IMR-90 (cell line): ENCODE measurements at regions of chr14 and their contacts with region 1.

Region 1: GRCh38 chr14:34582117-34582680 is 42.7 kb upstream of the EAPP start:
- DNase-seq: no peak
- ATAC-seq: no peak
- H3K4me3 ChIP-seq: no peak overlapping the region
- H3K27ac ChIP-seq: no peak overlapping the region
- H3K4me1 ChIP-seq: no peaks in the 10 kb centered on the region
- H3K27me3 ChIP-seq: no peaks in the 10 kb centered on the region
- CTCF ChIP-seq: no peak
- POLR2A ChIP-seq: no peak
- RAD21 ChIP-seq: no peak

Region 2: DNA sequence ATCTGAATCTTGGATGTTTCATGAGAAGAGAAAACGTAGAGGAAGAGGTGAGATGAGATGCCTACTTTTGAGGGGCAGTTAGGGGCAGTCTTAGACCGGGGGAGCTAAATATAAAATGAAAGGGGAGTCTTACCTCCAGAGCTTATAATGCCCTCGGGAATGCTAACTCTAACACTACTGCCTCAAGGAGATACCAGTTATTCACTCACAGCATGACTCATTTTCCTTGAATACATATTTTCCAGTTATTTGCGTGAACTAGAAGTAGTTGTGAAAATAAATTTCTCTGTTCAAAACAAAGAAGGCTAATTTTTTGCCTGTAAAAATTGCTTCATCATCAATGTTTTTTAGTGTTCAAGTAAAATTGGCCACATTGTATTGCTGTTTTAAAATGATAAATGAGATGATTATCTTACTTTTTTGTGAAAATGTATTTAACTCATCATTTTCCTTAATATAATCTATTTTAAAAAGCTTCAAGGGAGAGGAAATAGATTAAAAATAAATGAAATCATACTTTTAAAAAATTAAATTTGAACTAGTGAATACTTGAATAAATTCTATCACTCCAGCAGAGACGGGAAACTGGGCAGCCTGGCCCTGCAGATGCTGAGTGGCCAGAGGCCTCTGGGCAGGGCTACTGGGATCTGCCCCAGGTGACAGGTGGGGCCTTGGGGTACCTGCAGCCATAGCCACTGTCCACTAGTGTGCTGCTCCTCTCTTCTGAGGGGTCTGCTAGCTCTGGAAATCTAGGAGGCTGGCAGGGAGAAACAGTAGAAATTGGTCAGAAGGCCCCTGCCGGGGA is 970.6 kb before region 1 on chr14:
- CTCF ChIA-PET with region 1: no interaction called
- POLR2A ChIA-PET with region 1: no interaction called
- dilution Hi-C with region 1: no loop called
- in situ Hi-C with region 1: no loop called
- intact Hi-C with region 1: no loop called
- DNase-seq: no peak
- ATAC-seq: no peak
- H3K4me3 ChIP-seq: no peak overlapping the region
- H3K27ac ChIP-seq: no peak overlapping the region
- H3K4me1 ChIP-seq: no peaks in the 10 kb centered on the region
- H3K27me3 ChIP-seq: no peaks in the 10 kb centered on the region
- CTCF ChIP-seq: no peak
- POLR2A ChIP-seq: no peak
- RAD21 ChIP-seq: no peak

Region 3: DNA sequence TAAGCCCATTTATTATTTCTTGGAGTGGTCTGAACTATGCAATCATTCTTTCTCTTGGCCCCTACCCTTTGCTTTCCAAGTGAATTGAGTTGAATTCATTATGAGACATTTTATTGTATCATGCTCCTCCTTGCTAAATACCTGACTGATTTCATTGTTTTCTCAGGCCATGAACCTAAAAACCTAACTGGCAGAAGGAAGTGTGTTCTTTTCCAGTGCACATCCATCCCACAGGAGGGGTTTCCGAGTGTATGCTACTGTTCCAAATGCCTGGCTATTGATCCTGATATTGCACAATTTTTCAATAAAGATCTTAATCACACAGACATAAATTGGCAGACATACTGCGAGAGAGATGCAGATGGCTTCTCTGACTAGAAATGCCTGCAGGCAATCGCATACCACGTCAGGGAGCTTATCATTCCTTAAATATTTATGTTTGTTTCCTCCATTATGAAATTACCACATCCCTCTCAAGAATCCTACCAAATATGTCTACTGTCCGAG is 469.1 kb before region 1 on chr14:
- CTCF ChIA-PET with region 1: no interaction called
- POLR2A ChIA-PET with region 1: no interaction called
- dilution Hi-C with region 1: no loop called
- in situ Hi-C with region 1: no loop called
- intact Hi-C with region 1: no loop called
- DNase-seq: peak; percentile 31
- ATAC-seq: peak; percentile 62
- H3K4me3 ChIP-seq: no peak overlapping the region
- H3K27ac ChIP-seq: no peak overlapping the region
- H3K4me1 ChIP-seq: no peaks in the 10 kb centered on the region; the same call in 1 of the 2 replicates
- H3K27me3 ChIP-seq: no peaks in the 10 kb centered on the region; the same call in 1 of the 2 replicates
- CTCF ChIP-seq: no peak
- POLR2A ChIP-seq: no peak
- RAD21 ChIP-seq: no peak

Region 4: GRCh38 chr14:34593740-34594375 is 11.7 kb after region 1 on chr14:
- CTCF ChIA-PET with region 1: interaction called, 3 read pairs
- POLR2A ChIA-PET with region 1: interaction called, 10 read pairs
- dilution Hi-C with region 1: no loop called
- in situ Hi-C with region 1: no loop called
- intact Hi-C with region 1: no loop called
- DNase-seq: peak; percentile 83
- ATAC-seq: peak; percentile 82
- H3K4me3 ChIP-seq: no peak overlapping the region
- H3K27ac ChIP-seq: peak overlapping the region; percentile 87; the same call in 1 of the 2 replicates
- H3K4me1 ChIP-seq: no peaks in the 10 kb centered on the region
- H3K27me3 ChIP-seq: no peaks in the 10 kb centered on the region
- CTCF ChIP-seq: no peak
- POLR2A ChIP-seq: no peak
- RAD21 ChIP-seq: no peak